ENCODE measurements at regions of chr10 and their contacts with region 1.

Region 1: DNA sequence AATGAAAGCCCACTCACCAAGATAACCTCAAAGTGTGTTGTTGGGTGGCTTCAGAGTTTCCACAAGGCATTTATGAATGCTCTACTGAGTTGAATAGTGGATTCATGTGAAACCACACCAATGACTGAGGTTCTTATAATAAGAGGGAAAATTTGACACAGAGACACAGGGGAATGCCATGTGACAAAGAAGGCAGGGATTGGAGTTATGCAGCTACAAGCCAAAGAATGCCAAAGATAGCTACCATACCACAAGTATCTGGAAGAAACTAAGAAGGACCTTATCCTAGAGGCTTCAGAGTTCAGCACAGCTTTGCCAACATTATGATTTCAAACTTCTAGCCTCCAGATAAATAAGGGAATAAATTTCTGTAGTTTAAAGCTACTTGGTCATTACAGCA is 68.0 kb upstream of the PCDH15 start:
- DNase-seq: no peak
- ATAC-seq: no peak
- H3K4me3 ChIP-seq: no peak overlapping the region
- H3K27ac ChIP-seq: no peak overlapping the region
- H3K4me1 ChIP-seq: no peaks in the 10 kb centered on the region
- H3K27me3 ChIP-seq: no peaks in the 10 kb centered on the region
- CTCF ChIP-seq: no peak
- EP300 ChIP-seq: no peak
- POLR2A ChIP-seq: no peak
- RAD21 ChIP-seq: no peak

Region 2: GRCh38 chr10:53013201-53013810 is 1855.7 kb before region 1 on chr10:
- CTCF ChIA-PET with region 1: no interaction called
- POLR2A ChIA-PET with region 1: no interaction called
- in situ Hi-C with region 1: no loop called
- intact Hi-C with region 1: loop called (anchors 5 kb)
- DNase-seq: no peak
- ATAC-seq: no peak
- H3K4me3 ChIP-seq: no peak overlapping the region
- H3K27ac ChIP-seq: no peak overlapping the region
- H3K4me1 ChIP-seq: peaks cover 30% of the 10 kb centered on the region
- H3K27me3 ChIP-seq: no peaks in the 10 kb centered on the region; a peak in 1 of 5 replicates
- CTCF ChIP-seq: no peak
- EP300 ChIP-seq: no peak
- POLR2A ChIP-seq: no peak
- RAD21 ChIP-seq: no peak

Region 3: DNA sequence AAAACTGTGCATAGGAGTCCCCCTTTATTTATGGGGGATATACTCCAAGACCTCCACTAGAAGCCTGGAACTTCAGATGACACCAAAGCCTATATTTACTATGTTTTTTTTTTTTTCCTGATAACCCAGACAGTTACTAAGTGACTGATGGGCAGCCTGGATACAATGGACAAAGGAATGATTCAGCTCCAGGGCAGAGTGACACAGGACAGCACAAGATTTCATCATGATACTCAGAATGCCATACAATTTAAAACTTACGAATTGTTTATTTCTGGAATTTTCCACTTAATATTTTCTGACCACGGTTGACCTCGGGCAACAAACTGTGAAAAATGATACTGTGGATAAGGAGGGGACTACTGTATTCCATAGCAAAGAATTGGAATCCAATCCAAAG is 911.6 kb before region 1 on chr10:
- CTCF ChIA-PET with region 1: no interaction called
- POLR2A ChIA-PET with region 1: no interaction called
- in situ Hi-C with region 1: no loop called
- intact Hi-C with region 1: no loop called
- DNase-seq: peak; percentile 90
- ATAC-seq: peak; percentile 99
- H3K4me3 ChIP-seq: peak overlapping the region in 1 of 3 experiments; percentile 1; a peak in 1 of 6 replicates
- H3K27ac ChIP-seq: peak overlapping the region; percentile 75
- H3K4me1 ChIP-seq: peaks cover 64% of the 10 kb centered on the region
- H3K27me3 ChIP-seq: no peaks in the 10 kb centered on the region
- CTCF ChIP-seq: no peak
- EP300 ChIP-seq: peak in 1 of 2 experiments; percentile 74; a peak in 1 of 4 replicates
- POLR2A ChIP-seq: no peak
- RAD21 ChIP-seq: no peak

Region 4: DNA sequence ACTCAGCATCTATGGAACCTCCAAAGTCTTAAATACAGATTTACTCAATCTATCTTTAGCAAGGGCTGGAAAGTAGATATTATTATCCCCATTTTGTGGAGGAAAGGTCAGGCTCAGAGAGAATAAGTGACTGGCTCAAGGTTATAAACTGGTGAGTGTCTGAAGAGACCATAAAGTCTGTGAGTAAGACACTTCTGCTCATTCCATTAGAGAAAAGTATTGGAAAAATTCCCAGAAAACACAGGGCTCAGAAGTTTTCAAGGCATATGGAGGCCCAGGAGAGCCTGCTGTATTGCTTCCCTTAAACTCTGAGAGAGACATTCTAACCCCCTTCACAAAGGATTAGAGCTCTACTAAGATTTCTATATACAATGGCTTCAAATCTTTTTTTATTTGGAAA is 202.8 kb before region 1 on chr10:
- CTCF ChIA-PET with region 1: no interaction called
- POLR2A ChIA-PET with region 1: no interaction called
- in situ Hi-C with region 1: no loop called
- intact Hi-C with region 1: no loop called
- DNase-seq: no peak
- ATAC-seq: no peak
- H3K4me3 ChIP-seq: no peak overlapping the region
- H3K27ac ChIP-seq: no peak overlapping the region
- H3K4me1 ChIP-seq: no peaks in the 10 kb centered on the region
- H3K27me3 ChIP-seq: no peaks in the 10 kb centered on the region
- CTCF ChIP-seq: no peak
- EP300 ChIP-seq: no peak
- POLR2A ChIP-seq: no peak
- RAD21 ChIP-seq: no peak

Region 5: GRCh38 chr10:55174419-55174818 is 305.4 kb after region 1 on chr10:
- CTCF ChIA-PET with region 1: no interaction called
- POLR2A ChIA-PET with region 1: no interaction called
- in situ Hi-C with region 1: no loop called
- intact Hi-C with region 1: no loop called
- DNase-seq: peak; percentile 8
- ATAC-seq: peak; percentile 84
- H3K4me3 ChIP-seq: no peak overlapping the region
- H3K27ac ChIP-seq: no peak overlapping the region
- H3K4me1 ChIP-seq: no peaks in the 10 kb centered on the region
- H3K27me3 ChIP-seq: no peaks in the 10 kb centered on the region
- CTCF ChIP-seq: 0 out of 2 replicates have a peak, but pooled peaks have one; percentile 10
- EP300 ChIP-seq: no peak
- POLR2A ChIP-seq: no peak
- RAD21 ChIP-seq: no peak